HepG2 (cell line): ENCODE measurements at regions of chr14 and their contacts with region 1.

Region 1: DNA sequence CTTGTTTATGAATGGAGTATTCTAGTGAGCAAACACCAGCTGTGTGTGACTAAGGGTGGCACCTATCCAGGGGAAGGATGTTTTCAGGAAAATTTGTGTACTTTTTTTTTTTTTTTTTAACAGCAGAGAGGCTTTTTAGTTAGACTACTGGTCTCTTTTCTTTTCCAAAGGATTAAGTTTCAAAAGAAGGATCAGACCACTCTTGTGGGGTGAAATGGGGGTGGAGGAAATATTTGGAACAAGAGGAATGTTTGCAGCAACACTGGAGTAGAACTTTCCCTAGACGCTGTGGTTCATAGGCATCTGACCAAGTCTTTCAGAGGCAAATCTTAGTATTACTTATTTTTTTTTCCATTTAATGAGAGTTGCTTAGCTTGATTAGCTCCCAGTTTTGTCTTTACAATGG is 21.1 kb downstream of the NUBPL start:
- DNase-seq: no peak
- ATAC-seq: no peak
- H3K4me3 ChIP-seq: no peak overlapping the region
- H3K27ac ChIP-seq: no peak overlapping the region
- H3K4me1 ChIP-seq: peaks cover 10% of the 10 kb centered on the region
- H3K27me3 ChIP-seq: no peaks in the 10 kb centered on the region
- CTCF ChIP-seq: no peak
- EP300 ChIP-seq: no peak
- POLR2A ChIP-seq: no peak
- RAD21 ChIP-seq: no peak

Region 2: GRCh38 chr14:31527087-31527486 is 55.2 kb before region 1 on chr14:
- CTCF ChIA-PET with region 1: no interaction called
- POLR2A ChIA-PET with region 1: no interaction called
- in situ Hi-C with region 1: no loop called
- intact Hi-C with region 1: no loop called
- DNase-seq: no peak
- ATAC-seq: no peak; the same call in 2 of the 3 replicates
- H3K4me3 ChIP-seq: no peak overlapping the region
- H3K27ac ChIP-seq: no peak overlapping the region
- H3K4me1 ChIP-seq: peaks cover 16% of the 10 kb centered on the region
- H3K27me3 ChIP-seq: no peaks in the 10 kb centered on the region
- CTCF ChIP-seq: no peak
- EP300 ChIP-seq: no peak
- POLR2A ChIP-seq: no peak
- RAD21 ChIP-seq: no peak

Region 3: GRCh38 chr14:31561155-31561846 is 21.0 kb before region 1 on chr14 and contains the start of gene NUBPL:
- CTCF ChIA-PET with region 1: no interaction called
- POLR2A ChIA-PET with region 1: no interaction called
- in situ Hi-C with region 1: no loop called
- intact Hi-C with region 1: loop called (anchors 1 kb)
- DNase-seq: peak; percentile 97
- ATAC-seq: peak; percentile 95
- H3K4me3 ChIP-seq: peak within 1 kb of the TSS; percentile 84 to 93 (median 89)
- H3K27ac ChIP-seq: peak within 1 kb of the TSS; percentile 67
- H3K4me1 ChIP-seq: peaks cover 30% of the 10 kb centered on the region
- H3K27me3 ChIP-seq: no peaks in the 10 kb centered on the region; a peak in 1 of 5 replicates
- CTCF ChIP-seq: peak; percentile 43
- EP300 ChIP-seq: peak; percentile 80 to 91
- POLR2A ChIP-seq: peak; percentile 90 to 98
- RAD21 ChIP-seq: peak; percentile 73
- total RNA-seq, gene NUBPL: 44.1 and 67.1 TPM in 2 replicates

Region 4: DNA sequence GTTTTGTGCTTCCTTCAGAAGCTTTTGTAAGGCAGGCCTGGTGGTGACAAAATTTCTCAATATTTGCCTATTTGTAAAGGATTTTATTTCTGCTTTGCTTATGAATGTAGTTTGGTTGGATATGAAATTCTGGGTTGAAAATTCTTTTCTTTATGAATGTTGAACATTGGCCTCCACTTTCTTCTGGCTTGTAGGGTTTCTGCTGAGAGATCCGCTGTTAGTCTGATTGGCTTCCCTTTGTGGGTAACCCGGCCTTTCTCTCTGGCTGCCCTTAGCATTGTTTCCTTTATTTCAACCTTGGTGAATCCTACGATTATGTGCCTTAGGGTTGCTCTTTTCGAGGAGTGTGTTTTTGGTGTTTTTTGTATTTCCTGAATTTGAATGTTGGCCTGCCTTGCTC is 37.2 kb after region 1 on chr14:
- CTCF ChIA-PET with region 1: no interaction called
- POLR2A ChIA-PET with region 1: no interaction called
- in situ Hi-C with region 1: no loop called
- intact Hi-C with region 1: no loop called
- DNase-seq: no peak
- ATAC-seq: no peak
- H3K4me3 ChIP-seq: no peak overlapping the region
- H3K27ac ChIP-seq: no peak overlapping the region
- H3K4me1 ChIP-seq: peaks cover 20% of the 10 kb centered on the region
- H3K27me3 ChIP-seq: no peaks in the 10 kb centered on the region
- CTCF ChIP-seq: no peak
- EP300 ChIP-seq: no peak
- POLR2A ChIP-seq: no peak
- RAD21 ChIP-seq: no peak